ENCODE measurements at regions of chr1 and their contacts with region 1.

Region 1: GRCh38 chr1:21334214-21335087 is 44.2 kb upstream of the ECE1 start:
- DNase-seq: peak; percentile 88
- H3K4me3 Mint-ChIP-seq: peak overlapping the region; percentile 68
- H3K27ac Mint-ChIP-seq: peak overlapping the region; percentile 93
- H3K4me1 Mint-ChIP-seq: peaks cover 44% of the 10 kb centered on the region
- H3K27me3 Mint-ChIP-seq: no peaks in the 10 kb centered on the region
- CTCF ChIP-seq: peak; percentile 83

Region 2: DNA sequence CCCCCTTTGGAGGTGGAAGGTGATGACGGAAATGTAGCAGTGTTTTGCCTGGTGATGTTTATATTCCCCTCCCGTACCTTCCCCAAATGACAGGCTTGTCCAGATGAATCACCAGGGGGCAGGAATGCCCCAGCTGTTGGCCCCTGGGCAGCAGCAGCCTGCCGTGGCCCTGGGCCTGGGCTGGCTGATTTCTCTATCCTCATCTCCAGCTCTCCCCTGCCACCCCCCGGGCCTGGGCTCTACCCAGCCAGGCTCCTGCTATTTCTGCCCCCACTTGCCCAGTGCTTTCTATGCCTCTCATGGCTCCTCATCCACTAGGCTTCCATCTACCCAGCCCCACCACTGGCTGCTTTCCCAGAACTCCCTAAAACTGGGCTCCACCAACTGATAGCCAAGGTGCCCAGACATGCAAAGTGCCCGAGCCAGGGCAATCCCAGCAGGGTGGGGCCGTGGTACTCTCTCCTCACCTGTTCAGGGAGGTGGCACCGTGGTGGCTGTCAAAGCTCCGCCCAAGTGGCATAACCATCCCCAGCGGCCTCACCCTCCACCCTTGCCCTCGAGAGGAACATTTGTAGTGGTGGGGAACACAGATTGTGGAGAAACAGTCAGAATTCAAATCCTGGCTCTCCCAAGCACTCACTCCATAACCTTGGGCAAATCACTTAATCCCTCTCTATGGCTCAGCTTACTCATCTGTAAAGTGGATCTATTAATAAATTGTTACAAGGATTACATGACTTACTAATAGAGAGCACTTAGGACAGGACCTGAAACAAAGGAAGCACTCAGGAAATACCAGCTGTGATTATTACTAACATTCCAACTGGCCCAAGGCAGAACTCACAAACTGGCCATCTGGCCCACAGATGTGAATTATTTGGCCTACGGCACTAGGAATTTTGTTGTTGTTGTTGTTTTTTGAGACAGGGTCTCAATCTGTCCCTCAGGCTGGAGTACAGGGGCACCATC is 31.4 kb before region 1 on chr1:
- CTCF ChIA-PET with region 1: interaction called, 5 read pairs
- POLR2A ChIA-PET with region 1: interaction called, 6 read pairs
- intact Hi-C with region 1: loop called (anchors 1 kb)
- DNase-seq: peak; percentile 53
- H3K4me3 Mint-ChIP-seq: peak overlapping the region; percentile 44
- H3K27ac Mint-ChIP-seq: peak overlapping the region; percentile 65
- H3K4me1 Mint-ChIP-seq: peaks cover 8% of the 10 kb centered on the region
- H3K27me3 Mint-ChIP-seq: no peaks in the 10 kb centered on the region
- CTCF ChIP-seq: peak; percentile 17